ENCODE measurements at regions of chr5 and their contacts with region 1.

Region 1: GRCh38 chr5:61228691-61229280 is 66.5 kb upstream of the SMIM15 start:
- DNase-seq: no peak
- ATAC-seq: peak in 1 of 4 donors; percentile 23
- H3K4me3 ChIP-seq: no peak overlapping the region
- H3K27ac ChIP-seq: no peak overlapping the region
- H3K4me1 ChIP-seq: no peaks in the 10 kb centered on the region
- H3K27me3 ChIP-seq: no peaks in the 10 kb centered on the region
- CTCF ChIP-seq: no peak

Region 2: DNA sequence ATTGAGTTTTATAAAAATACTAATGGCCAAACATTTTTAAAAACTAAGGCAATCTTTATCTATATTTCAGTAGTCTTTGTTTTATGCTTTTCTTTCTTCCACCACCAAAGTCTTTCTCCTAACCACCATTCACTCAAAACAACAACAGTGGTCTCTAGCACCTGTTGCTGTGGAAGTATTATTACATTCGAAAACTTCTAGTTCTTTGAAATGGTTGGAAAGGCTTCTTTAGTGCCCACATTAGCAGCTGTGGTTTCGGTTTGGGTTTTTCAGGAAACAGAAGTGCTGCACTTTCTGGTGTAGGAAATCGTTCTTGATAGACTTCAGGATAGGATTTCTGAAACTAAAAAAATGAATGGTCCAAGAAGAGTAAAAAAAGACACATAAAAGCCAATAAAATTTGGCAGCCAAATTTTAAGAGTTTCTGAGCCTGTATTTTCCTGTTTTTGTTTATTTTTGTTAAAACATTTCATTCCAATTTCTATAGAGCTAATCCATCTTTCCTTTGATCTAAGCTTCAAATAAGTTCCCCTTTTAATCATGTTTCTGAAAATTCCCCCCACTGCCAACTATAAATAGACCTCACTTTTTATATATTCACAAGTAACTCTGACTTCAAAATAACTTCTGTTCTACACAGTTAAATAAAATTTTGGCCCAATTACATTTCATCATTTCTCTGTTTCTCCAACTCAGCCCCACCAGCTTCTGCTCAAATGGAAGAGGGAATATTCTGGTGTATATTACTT is 631.0 kb before region 1 on chr5:
- intact Hi-C with region 1: no loop called
- DNase-seq: no peak
- ATAC-seq: no peak
- H3K4me3 ChIP-seq: no peak overlapping the region
- H3K27ac ChIP-seq: no peak overlapping the region
- H3K4me1 ChIP-seq: no peaks in the 10 kb centered on the region
- H3K27me3 ChIP-seq: no peaks in the 10 kb centered on the region
- CTCF ChIP-seq: no peak

Region 3: GRCh38 chr5:61010467-61011454 is 218.0 kb before region 1 on chr5:
- intact Hi-C with region 1: no loop called
- DNase-seq: peak in 1 of 2 donors; percentile 25
- ATAC-seq: no peak
- H3K4me3 ChIP-seq: no peak overlapping the region
- H3K27ac ChIP-seq: no peak overlapping the region
- H3K4me1 ChIP-seq: no peaks in the 10 kb centered on the region
- H3K27me3 ChIP-seq: no peaks in the 10 kb centered on the region
- CTCF ChIP-seq: no peak

Region 4: GRCh38 chr5:61277190-61277589 is 48.4 kb after region 1 on chr5:
- intact Hi-C with region 1: loop called in 1 of 2 experiments (anchors 10 kb)
- DNase-seq: no peak
- ATAC-seq: peak in 1 of 4 donors; percentile 41
- H3K4me3 ChIP-seq: no peak overlapping the region
- H3K27ac ChIP-seq: no peak overlapping the region
- H3K4me1 ChIP-seq: no peaks in the 10 kb centered on the region
- H3K27me3 ChIP-seq: peaks cover 0 to 5% (median 0%) of the 10 kb centered on the region in 3 donors
- CTCF ChIP-seq: no peak